GM12878 (cell line): ENCODE measurements at regions of chr12 and their contacts with region 1.

Region 1: DNA sequence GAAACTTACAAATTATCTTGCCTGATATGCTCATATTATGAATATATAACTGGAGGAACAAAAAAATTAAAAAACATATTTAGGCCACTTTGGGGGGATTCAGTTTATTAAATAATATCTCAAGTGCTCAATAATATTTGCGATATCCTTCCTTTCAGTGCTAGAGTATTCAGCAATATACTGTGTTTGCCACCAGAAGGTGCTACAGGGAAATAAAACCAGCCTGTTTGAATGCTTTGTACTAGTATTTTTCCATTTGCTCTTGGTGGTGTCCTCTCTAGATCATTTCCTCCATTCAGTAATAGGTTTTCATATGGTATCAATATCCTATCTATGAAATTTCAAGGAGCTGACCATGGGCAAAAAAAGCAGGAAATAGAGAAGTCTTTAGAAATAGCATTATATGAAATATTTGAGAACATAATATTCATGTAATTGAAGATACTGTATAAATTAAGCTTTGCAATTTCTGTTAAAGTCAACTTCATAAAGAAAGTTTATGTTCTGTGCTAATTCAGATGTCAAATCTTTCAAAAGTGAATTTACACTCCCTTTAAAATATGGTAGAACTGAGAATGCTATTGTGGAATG is 106.2 kb upstream of the NAV3 start:
- DNase-seq: no peak
- ATAC-seq: peak; percentile 83
- H3K4me3 ChIP-seq: no peak overlapping the region
- H3K27ac ChIP-seq: no peak overlapping the region
- H3K4me1 ChIP-seq: no peaks in the 10 kb centered on the region
- H3K27me3 ChIP-seq: no peaks in the 10 kb centered on the region
- CTCF ChIP-seq: peak; percentile 55 to 79 (median 65); a peak in 5 of 6 replicates
- EP300 ChIP-seq: no peak
- POLR2A ChIP-seq: no peak
- RAD21 ChIP-seq: peak; percentile 94

Region 2: GRCh38 chr12:77477907-77478533 is 246.4 kb before region 1 on chr12:
- CTCF ChIA-PET with region 1: no interaction called
- POLR2A ChIA-PET with region 1: no interaction called
- RAD21 ChIA-PET with region 1: no interaction called
- SMC1A ChIA-PET with region 1: no interaction called
- in situ Hi-C with region 1: no loop called
- intact Hi-C with region 1: no loop called
- DNase-seq: no peak
- ATAC-seq: no peak
- H3K4me3 ChIP-seq: no peak overlapping the region
- H3K27ac ChIP-seq: no peak overlapping the region
- H3K4me1 ChIP-seq: no peaks in the 10 kb centered on the region
- H3K27me3 ChIP-seq: no peaks in the 10 kb centered on the region
- CTCF ChIP-seq: no peak
- EP300 ChIP-seq: no peak
- POLR2A ChIP-seq: no peak
- RAD21 ChIP-seq: no peak

Region 3: GRCh38 chr12:77914081-77914488 is 189.6 kb after region 1 on chr12:
- CTCF ChIA-PET with region 1: interaction called, 6 read pairs
- POLR2A ChIA-PET with region 1: no interaction called
- RAD21 ChIA-PET with region 1: interaction called, 3 read pairs
- SMC1A ChIA-PET with region 1: interaction called, 13 read pairs
- in situ Hi-C with region 1: no loop called
- intact Hi-C with region 1: no loop called
- DNase-seq: no peak
- ATAC-seq: no peak
- H3K4me3 ChIP-seq: no peak overlapping the region
- H3K27ac ChIP-seq: no peak overlapping the region
- H3K4me1 ChIP-seq: no peaks in the 10 kb centered on the region
- H3K27me3 ChIP-seq: no peaks in the 10 kb centered on the region
- CTCF ChIP-seq: peak in 1 of 3 experiments; percentile 21; a peak in 1 of 6 replicates
- EP300 ChIP-seq: no peak
- POLR2A ChIP-seq: no peak
- RAD21 ChIP-seq: peak; percentile 41